Endothelial cell of umbilical vein (primary cell): ENCODE measurements at regions of chr9 and their contacts with region 1.

Region 1: DNA sequence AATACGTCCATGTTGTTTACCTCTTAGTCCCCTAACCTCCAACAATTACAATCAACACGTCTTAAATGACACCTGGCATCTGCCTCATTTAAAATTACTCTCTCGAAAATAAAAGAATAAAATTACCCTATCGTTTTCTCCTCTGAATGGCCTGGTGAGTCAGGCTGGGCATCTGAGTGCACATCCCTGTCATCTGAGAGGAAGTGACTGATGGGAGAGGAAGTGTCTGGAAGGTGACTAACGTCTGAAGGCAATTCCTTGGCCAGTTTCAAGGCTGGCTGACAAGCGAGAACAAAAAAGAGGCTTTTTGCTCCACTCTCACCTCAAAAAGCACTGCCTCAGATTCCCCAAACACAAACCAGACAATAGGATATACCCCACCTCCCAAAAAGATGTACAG is 57.7 kb downstream of the MAPKAP1 start:
- DNase-seq: peak; percentile 92
- H3K4me3 ChIP-seq: no peak overlapping the region
- H3K27ac ChIP-seq: peak overlapping the region; percentile 99
- H3K4me1 ChIP-seq: peaks cover 52% of the 10 kb centered on the region
- H3K27me3 ChIP-seq: no peaks in the 10 kb centered on the region
- CTCF ChIP-seq: no peak
- POLR2A ChIP-seq: peak; percentile 41

Region 2: DNA sequence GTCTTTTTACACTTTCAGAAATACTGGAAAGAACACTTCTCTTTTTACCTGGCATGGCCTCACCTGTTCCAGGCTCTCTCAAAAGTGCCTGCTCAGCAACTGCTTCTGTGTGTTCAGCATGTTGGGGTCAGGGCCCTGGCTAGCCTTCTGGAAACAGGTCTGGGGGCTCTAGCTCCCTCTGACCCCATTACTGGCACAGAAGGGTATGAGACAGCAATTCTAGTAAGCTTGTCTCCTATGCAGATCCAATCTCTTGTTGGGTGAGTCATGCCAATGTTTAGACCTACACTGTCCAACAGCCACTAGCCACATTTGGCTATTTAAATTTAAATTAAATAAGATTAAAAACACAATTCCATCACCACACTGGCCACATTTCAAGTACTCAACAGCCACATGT is 23.1 kb before region 1 on chr9:
- CTCF ChIA-PET with region 1: no interaction called
- POLR2A ChIA-PET with region 1: no interaction called
- dilution Hi-C with region 1: no loop called
- intact Hi-C with region 1: no loop called
- DNase-seq: no peak
- H3K4me3 ChIP-seq: no peak overlapping the region
- H3K27ac ChIP-seq: no peak overlapping the region
- H3K4me1 ChIP-seq: no peaks in the 10 kb centered on the region
- H3K27me3 ChIP-seq: no peaks in the 10 kb centered on the region
- CTCF ChIP-seq: no peak
- POLR2A ChIP-seq: no peak

Region 3: GRCh38 chr9:125663127-125663526 is 13.8 kb after region 1 on chr9:
- CTCF ChIA-PET with region 1: interaction called, 4 read pairs
- POLR2A ChIA-PET with region 1: no interaction called
- dilution Hi-C with region 1: no loop called
- intact Hi-C with region 1: loop called (anchors 2 kb)
- DNase-seq: peak; percentile 88
- H3K4me3 ChIP-seq: no peak overlapping the region
- H3K27ac ChIP-seq: peak overlapping the region; percentile 51
- H3K4me1 ChIP-seq: peaks cover 28% of the 10 kb centered on the region
- H3K27me3 ChIP-seq: no peaks in the 10 kb centered on the region
- CTCF ChIP-seq: no peak
- POLR2A ChIP-seq: peak; percentile 62

Region 4: DNA sequence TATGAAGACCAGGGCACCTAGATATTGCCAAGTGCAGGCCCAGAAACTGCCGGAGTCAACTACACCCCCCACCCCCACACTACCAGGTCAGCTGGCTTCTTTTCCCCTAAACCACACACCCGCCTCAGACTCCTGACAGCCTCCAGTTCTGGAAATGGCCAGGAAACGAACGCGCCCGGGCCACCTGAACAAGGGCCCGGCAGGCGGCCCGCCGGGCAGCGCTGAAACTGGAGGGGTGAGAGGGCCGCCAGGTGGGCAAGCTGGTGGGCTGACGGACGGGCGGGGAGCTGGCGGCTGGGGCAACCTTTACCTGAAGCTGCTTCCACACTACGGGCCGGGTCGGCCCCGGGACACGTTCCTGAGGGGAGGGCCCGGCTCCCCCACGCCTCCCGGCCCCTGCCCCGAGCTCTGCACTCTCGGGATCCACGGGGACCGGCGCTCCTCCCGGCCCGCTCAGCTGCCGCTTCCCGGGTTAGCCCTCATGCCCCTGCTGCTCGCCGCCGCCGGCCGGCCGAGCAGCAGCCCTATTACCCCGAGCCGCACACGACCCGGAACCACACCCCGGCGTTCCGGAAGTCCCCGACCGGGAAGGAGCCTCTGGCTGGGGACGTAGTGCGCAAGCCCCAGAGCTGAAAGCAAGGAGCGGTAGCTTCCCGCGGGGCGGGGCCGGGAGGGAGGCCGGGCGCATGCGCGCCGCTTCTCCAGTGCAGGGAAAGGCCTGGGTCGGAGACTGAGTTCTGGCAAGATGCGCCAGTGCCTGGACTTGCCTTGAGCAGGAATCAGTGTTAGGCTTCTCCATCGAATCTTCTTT is 57.6 kb after region 1 on chr9 and contains the start of gene MAPKAP1:
- CTCF ChIA-PET with region 1: interaction called, 5 read pairs
- POLR2A ChIA-PET with region 1: interaction called, 3 read pairs
- dilution Hi-C with region 1: no loop called
- intact Hi-C with region 1: loop called (anchors 1 kb)
- DNase-seq: peak; percentile 95
- H3K4me3 ChIP-seq: peak within 1 kb of the TSS; percentile 75 to 85 (median 84)
- H3K27ac ChIP-seq: peak within 1 kb of the TSS; percentile 82
- H3K4me1 ChIP-seq: peaks cover 13% of the 10 kb centered on the region
- H3K27me3 ChIP-seq: no peaks in the 10 kb centered on the region
- CTCF ChIP-seq: no peak
- POLR2A ChIP-seq: peak; percentile 82
- total RNA-seq, gene MAPKAP1: 98.6 and 99.1 TPM in 2 replicates